HepG2 (cell line): ENCODE measurements at regions of chr14 and their contacts with region 1.

Region 1: GRCh38 chr14:50396631-50397390 is at the start of gene CDKL1:
- DNase-seq: peak; percentile 32
- ATAC-seq: peak; percentile 88
- H3K4me3 ChIP-seq: peak within 1 kb of the TSS; percentile 61 to 73 (median 61)
- H3K27ac ChIP-seq: peak within 1 kb of the TSS; percentile 53
- H3K4me1 ChIP-seq: peaks cover 46% of the 10 kb centered on the region
- H3K27me3 ChIP-seq: no peaks in the 10 kb centered on the region
- CTCF ChIP-seq: no peak; the same call in 1 of the 2 replicates
- EP300 ChIP-seq: no peak
- POLR2A ChIP-seq: peak in 1 of 2 experiments; percentile 46; a peak in 2 of 4 replicates
- RAD21 ChIP-seq: peak; percentile 28; the same call in 1 of the 2 replicates
- total RNA-seq, gene CDKL1: 5.1 and 7.9 TPM in 2 replicates

Region 2: DNA sequence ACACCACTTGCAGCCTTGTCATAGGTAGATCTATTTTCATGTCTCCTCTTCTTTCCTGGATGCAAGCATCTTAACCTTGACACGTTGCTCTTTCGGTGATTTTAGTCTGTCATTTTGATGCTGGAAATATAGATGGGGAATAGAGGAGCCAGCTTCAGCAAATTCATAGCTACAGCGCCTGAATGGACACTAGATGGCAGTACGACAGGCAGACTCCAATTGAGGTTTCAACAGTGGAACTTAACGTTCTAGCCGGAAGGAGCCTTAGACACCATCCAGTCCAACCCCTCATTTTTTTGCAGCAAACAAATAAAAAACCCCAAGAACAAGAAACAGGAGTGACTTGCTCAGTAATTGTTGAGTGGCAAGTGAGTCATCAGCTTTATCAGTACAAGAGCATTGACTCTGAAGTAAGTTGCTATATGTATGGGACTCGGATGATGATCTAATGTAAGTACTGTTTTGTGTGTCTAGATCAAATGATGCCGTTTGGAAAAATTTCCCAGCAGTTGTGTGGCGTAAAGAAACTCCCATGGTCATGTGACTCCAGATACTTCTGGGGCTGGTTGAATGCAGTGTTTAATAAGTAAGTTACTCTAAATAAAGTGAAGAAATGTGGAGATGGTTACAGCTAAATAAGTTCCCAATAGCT is 75.7 kb before region 1 on chr14:
- CTCF ChIA-PET with region 1: no interaction called
- POLR2A ChIA-PET with region 1: interaction called, 5 read pairs
- in situ Hi-C with region 1: no loop called
- intact Hi-C with region 1: loop called (anchors 5 kb)
- DNase-seq: peak; percentile 68
- ATAC-seq: peak; percentile 96
- H3K4me3 ChIP-seq: no peak overlapping the region
- H3K27ac ChIP-seq: no peak overlapping the region
- H3K4me1 ChIP-seq: peaks cover 10% of the 10 kb centered on the region
- H3K27me3 ChIP-seq: no peaks in the 10 kb centered on the region
- CTCF ChIP-seq: peak; percentile 89
- EP300 ChIP-seq: no peak
- POLR2A ChIP-seq: no peak
- RAD21 ChIP-seq: peak; percentile 34; the same call in 1 of the 2 replicates

Region 3: DNA sequence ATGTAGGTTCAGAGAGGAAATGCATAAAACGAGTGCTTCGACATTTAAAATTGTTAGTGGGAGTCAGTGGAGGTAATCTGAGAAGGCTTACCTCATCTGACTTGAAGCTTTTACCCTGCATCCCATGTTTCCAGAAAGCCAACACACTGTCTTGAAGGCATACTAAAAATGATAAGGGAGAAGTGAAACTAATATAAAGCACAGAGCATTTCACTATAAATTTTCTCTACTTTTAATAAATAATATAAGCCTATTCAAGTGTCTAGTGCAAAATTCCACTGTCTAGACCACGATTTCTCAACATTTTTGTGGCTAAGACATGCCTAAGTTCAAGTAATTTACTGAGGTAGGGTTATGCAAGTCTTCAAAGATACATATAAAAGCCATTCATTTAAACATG is 29.0 kb after region 1 on chr14:
- CTCF ChIA-PET with region 1: no interaction called
- POLR2A ChIA-PET with region 1: no interaction called
- in situ Hi-C with region 1: no loop called
- intact Hi-C with region 1: no loop called
- DNase-seq: no peak
- ATAC-seq: no peak
- H3K4me3 ChIP-seq: no peak overlapping the region
- H3K27ac ChIP-seq: no peak overlapping the region
- H3K4me1 ChIP-seq: peaks cover 6% of the 10 kb centered on the region; the same call in 1 of the 2 replicates
- H3K27me3 ChIP-seq: no peaks in the 10 kb centered on the region
- CTCF ChIP-seq: no peak
- EP300 ChIP-seq: no peak
- POLR2A ChIP-seq: no peak
- RAD21 ChIP-seq: no peak

Region 4: DNA sequence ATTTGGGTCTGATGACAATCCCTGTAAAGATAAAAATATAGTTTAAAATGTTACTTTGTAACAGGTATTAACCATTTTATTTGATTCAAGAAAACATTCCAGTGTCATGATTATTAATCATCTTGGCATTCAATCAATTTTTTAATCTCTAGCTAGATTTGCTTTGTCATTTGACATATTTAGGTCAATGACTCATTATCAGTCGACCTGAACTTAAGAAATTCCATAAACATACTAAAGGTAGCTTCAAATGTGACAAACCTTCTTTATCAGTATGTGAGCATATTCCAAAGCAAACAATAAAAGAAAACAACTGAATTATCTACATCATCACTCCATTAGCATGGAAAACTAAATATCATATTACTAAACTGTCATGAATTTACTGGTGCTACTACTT is 50.6 kb after region 1 on chr14:
- CTCF ChIA-PET with region 1: no interaction called
- POLR2A ChIA-PET with region 1: no interaction called
- in situ Hi-C with region 1: no loop called
- intact Hi-C with region 1: loop called (anchors 5 kb)
- DNase-seq: no peak
- ATAC-seq: no peak
- H3K4me3 ChIP-seq: no peak overlapping the region
- H3K27ac ChIP-seq: no peak overlapping the region
- H3K4me1 ChIP-seq: 0 out of 2 replicates have a peak, but pooled peaks cover under 1% of the 10 kb centered on the region
- H3K27me3 ChIP-seq: no peaks in the 10 kb centered on the region
- CTCF ChIP-seq: no peak
- EP300 ChIP-seq: no peak
- POLR2A ChIP-seq: no peak
- RAD21 ChIP-seq: no peak

Region 5: GRCh38 chr14:50906326-50907065 is 509.7 kb after region 1 on chr14:
- CTCF ChIA-PET with region 1: no interaction called
- POLR2A ChIA-PET with region 1: no interaction called
- in situ Hi-C with region 1: no loop called
- intact Hi-C with region 1: no loop called
- DNase-seq: no peak
- ATAC-seq: no peak
- H3K4me3 ChIP-seq: no peak overlapping the region
- H3K27ac ChIP-seq: no peak overlapping the region
- H3K4me1 ChIP-seq: peaks cover 15% of the 10 kb centered on the region
- H3K27me3 ChIP-seq: no peaks in the 10 kb centered on the region
- CTCF ChIP-seq: no peak
- EP300 ChIP-seq: no peak
- POLR2A ChIP-seq: no peak
- RAD21 ChIP-seq: no peak